ENCODE measurements at regions of chr16 and their contacts with region 1.

Region 1: DNA sequence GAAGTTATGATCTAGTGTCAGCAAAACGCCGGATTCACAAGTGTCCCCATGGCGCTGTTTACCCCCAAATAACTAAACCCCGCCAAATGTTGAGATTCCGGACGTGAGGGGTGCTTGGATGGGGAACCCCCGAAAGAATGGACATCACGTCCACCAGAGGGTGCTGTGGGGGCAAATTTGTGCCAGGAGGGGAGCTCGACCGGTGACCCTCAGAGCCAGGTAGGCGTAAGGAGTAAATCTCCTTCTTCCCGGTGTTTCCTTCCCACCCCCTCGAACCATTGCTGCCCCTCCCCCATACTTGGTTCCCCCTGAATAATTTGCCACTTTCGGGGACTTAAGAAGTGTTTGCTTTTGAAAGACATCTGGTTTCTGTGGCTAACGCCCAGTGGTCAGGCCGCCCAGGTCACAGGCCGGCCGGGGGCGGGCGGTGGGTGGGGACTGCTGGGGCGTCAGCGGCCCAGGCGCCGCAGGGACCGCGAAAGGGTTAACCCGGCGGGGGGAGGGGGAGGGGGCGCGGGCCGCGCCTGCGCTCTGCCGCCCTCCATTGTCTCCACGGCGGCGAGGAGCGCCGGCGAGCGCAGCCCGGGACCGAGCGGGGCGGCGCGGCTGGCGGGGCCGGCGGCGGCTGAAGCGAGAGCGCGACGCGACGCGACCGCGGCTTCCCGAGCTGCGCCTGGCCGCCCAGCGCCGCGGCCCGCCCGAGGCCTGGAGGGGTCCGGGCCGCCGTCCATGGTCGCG is at the start of gene ZNRF1:
- DNase-seq: peak; percentile 96
- CTCF ChIP-seq: peak; percentile 52

Region 2: GRCh38 chr16:75108792-75109734 is 110.4 kb after region 1 on chr16:
- in situ Hi-C with region 1: loop called (anchors 10 kb)
- DNase-seq: no peak
- CTCF ChIP-seq: no peak

Measured in GM13977 (cell line).